ENCODE measurements at regions of chr3 and their contacts with region 1.

Region 1: GRCh38 chr3:52471371-52472238 is 16.2 kb downstream of the NISCH start:
- H3K4me3 Mint-ChIP-seq: peak overlapping the region; percentile 26
- H3K27ac Mint-ChIP-seq: peak overlapping the region; percentile 85
- H3K4me1 Mint-ChIP-seq: peaks cover 69% of the 10 kb centered on the region
- H3K27me3 Mint-ChIP-seq: no peaks in the 10 kb centered on the region

Region 2: GRCh38 chr3:52253314-52254304 is 218.0 kb before region 1 on chr3:
- intact Hi-C with region 1: no loop called
- H3K4me3 Mint-ChIP-seq: peak overlapping the region; percentile 55
- H3K27ac Mint-ChIP-seq: peak overlapping the region; percentile 96
- H3K4me1 Mint-ChIP-seq: peaks cover 92% of the 10 kb centered on the region
- H3K27me3 Mint-ChIP-seq: no peaks in the 10 kb centered on the region

Region 3: GRCh38 chr3:52498137-52499054 is 26.8 kb after region 1 on chr3:
- intact Hi-C with region 1: loop called (anchors 2 kb)
- H3K4me3 Mint-ChIP-seq: peak overlapping the region; percentile 88
- H3K27ac Mint-ChIP-seq: peak overlapping the region; percentile 97
- H3K4me1 Mint-ChIP-seq: peaks cover 84% of the 10 kb centered on the region
- H3K27me3 Mint-ChIP-seq: no peaks in the 10 kb centered on the region